Activated naive CD4-positive, alpha-beta T cell treated with anti-CD3 and anti-CD28 coated beads, Interleukin-2, amount 10 ng/mL, durations not matched to agents 7 days and 5 days (primary cell): ENCODE measurements at regions of chr12 and their contacts with region 1.

Region 1: GRCh38 chr12:127108360-127109215 is 1158.4 kb upstream of the TMEM132C start:
- DNase-seq: peak; percentile 66
- H3K4me3 Mint-ChIP-seq: no peak overlapping the region
- H3K27ac Mint-ChIP-seq: no peak overlapping the region
- H3K4me1 Mint-ChIP-seq: no peaks in the 10 kb centered on the region
- H3K27me3 Mint-ChIP-seq: peaks cover 3% of the 10 kb centered on the region

Region 2: GRCh38 chr12:127119600-127120140 is 11.1 kb after region 1 on chr12:
- CTCF ChIA-PET with region 1: interaction called, 22 read pairs
- DNase-seq: no peak
- H3K4me3 Mint-ChIP-seq: no peak overlapping the region
- H3K27ac Mint-ChIP-seq: no peak overlapping the region
- H3K4me1 Mint-ChIP-seq: no peaks in the 10 kb centered on the region
- H3K27me3 Mint-ChIP-seq: peaks cover 3% of the 10 kb centered on the region

Region 3: DNA sequence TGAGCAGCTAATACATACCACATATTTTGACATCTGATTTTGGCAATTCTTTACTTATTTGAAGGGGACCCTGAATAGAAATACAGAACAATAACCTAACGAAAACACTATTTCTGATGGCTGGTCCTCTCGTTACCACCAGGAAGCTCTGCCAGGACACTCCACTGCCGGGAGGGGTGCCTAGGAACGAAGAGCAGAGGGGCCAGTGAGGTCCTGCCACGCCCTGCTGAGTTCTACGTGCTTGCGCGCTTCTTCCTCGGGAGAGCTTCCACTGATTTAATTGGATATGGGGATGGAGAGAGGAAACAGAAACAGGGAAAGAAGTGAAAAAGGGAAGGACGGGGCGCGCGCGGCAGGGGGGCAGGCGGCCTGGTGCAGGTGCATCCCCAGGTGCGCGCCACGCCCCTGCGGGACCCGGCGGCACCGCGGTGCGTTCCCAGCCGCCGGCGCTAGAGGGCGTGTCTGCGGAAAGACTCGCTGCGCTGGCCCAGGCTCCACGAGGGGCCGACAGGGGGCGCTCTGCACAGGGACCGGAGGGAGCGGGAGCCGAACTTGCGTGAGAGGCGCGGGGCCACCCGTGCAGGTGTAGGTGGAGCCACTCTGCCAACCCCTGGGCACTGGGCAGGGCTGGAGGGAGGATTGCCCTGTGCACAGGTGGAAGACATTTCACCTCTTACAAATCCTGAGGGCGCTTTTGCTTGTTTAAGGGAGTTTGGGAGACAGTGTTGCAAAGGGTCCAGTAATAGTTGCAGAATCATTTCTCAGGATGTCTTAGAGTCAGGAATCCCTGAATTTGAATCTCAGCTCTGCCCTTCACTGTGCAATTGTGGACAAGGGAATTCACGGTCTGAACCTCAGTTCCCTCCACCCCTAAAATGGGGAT is 172.0 kb after region 1 on chr12:
- CTCF ChIA-PET with region 1: interaction called, 14 read pairs
- DNase-seq: peak; percentile 77
- H3K4me3 Mint-ChIP-seq: no peak overlapping the region
- H3K27ac Mint-ChIP-seq: peak overlapping the region; percentile 69
- H3K4me1 Mint-ChIP-seq: no peaks in the 10 kb centered on the region
- H3K27me3 Mint-ChIP-seq: peaks cover 11% of the 10 kb centered on the region

Region 4: DNA sequence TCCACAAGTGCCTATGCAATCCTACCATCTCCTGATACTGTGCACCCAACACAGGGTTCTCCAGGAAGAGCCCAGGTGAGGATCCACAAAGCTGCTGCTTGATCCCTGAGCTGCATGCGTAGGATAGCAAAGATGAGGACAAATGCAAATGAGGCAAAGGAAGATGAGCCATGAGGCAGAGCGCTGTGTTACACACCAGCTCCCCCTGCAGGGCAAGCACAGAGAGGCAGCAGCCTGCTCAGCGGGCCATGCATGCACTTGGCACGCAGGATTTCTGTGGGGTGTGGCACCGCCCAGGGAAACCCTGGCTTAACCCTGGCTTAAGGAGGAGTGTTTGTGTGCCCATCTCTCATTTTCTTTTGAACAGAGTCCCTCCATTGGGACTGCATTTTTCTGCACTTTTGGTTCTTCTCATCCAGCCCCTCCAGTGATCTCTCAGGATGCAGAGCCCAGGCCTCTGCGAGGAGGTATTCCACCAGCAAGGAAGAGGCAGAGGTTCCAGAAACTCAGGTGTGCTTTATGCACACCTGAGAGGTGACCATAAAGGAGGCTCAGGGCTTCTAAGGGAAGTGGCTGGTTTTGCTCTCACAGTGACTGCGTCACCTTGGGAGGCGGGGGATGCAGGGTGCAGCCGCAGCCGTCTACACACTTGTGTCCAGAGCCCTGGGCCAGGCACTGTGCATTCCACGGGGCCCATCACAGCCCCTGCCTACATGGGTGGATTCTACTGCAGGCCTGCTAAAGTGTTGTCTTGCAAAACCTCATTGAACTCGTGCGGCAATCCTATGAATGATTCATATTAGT is 185.1 kb after region 1 on chr12:
- CTCF ChIA-PET with region 1: interaction called, 20 read pairs
- DNase-seq: peak; percentile 68
- H3K4me3 Mint-ChIP-seq: no peak overlapping the region
- H3K27ac Mint-ChIP-seq: no peak overlapping the region
- H3K4me1 Mint-ChIP-seq: no peaks in the 10 kb centered on the region
- H3K27me3 Mint-ChIP-seq: no peaks in the 10 kb centered on the region

Region 5: GRCh38 chr12:127363392-127363791 is 254.8 kb after region 1 on chr12:
- CTCF ChIA-PET with region 1: interaction called, 14 read pairs
- DNase-seq: no peak
- H3K4me3 Mint-ChIP-seq: no peak overlapping the region
- H3K27ac Mint-ChIP-seq: no peak overlapping the region
- H3K4me1 Mint-ChIP-seq: no peaks in the 10 kb centered on the region
- H3K27me3 Mint-ChIP-seq: no peaks in the 10 kb centered on the region

Region 6: DNA sequence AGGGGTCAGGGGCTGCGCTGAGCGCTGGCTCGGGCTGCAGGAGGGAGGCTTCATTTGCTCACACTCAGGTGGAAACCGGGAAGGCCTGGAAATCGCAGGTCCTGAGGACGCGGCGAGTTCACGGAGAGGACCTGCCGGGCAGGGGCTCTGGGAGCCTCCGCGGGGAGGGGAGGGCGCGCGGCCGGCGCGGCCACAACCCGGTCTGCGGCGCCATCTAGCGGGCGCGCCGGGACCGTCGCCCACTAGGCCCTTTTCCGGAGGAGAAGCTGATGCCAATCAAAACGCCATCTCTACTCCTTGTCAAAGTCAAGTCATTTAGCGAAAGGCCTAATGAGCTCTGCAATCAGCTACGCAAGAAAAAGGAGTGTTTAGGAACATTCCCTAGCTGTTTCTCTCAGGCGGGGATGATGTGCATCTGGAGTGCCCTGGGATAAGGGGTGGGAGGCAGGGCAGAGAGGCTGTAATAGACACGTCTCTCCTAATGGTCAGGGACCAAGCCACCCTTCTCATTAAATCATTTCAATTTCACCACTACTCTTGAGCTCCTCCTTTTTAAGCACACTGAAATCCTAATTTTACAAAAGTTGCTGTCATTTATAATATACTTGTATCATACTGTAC is 272.6 kb after region 1 on chr12:
- CTCF ChIA-PET with region 1: interaction called, 15 read pairs
- DNase-seq: peak; percentile 50
- H3K4me3 Mint-ChIP-seq: no peak overlapping the region
- H3K27ac Mint-ChIP-seq: no peak overlapping the region
- H3K4me1 Mint-ChIP-seq: no peaks in the 10 kb centered on the region
- H3K27me3 Mint-ChIP-seq: no peaks in the 10 kb centered on the region

Region 7: GRCh38 chr12:127677537-127678131 is 569.0 kb after region 1 on chr12:
- CTCF ChIA-PET with region 1: interaction called, 12 read pairs
- DNase-seq: peak; percentile 69
- H3K4me3 Mint-ChIP-seq: no peak overlapping the region
- H3K27ac Mint-ChIP-seq: no peak overlapping the region
- H3K4me1 Mint-ChIP-seq: no peaks in the 10 kb centered on the region
- H3K27me3 Mint-ChIP-seq: no peaks in the 10 kb centered on the region